Cardiac septum (tissue), 1 donor: ENCODE measurements at regions of chr10 and their contacts with region 1.

Region 1: GRCh38 chr10:28381903-28382347 is 79.1 kb upstream of the MPP7 start:
- DNase-seq: peak; percentile 81

Region 2: DNA sequence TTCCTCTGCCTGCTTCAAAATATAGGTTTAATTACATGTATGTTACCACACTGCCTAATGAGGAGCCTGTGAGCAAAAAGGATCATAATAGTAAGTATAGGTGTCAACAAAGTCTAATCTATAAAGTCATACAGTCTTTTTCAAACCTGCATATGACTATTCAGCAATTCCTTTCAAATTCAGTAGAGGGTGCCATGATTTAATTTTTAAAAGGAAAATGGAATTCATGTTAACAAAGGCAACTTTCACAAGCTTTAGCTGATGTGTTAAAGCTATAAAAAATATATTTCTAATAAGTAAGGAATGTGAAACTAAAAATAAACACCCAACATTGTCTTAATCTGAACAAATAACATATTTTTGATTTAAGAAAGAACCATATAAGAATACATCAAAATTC is 131.1 kb before region 1 on chr10:
- intact Hi-C with region 1: loop called (anchors 1 kb)
- DNase-seq: no peak

Region 3: DNA sequence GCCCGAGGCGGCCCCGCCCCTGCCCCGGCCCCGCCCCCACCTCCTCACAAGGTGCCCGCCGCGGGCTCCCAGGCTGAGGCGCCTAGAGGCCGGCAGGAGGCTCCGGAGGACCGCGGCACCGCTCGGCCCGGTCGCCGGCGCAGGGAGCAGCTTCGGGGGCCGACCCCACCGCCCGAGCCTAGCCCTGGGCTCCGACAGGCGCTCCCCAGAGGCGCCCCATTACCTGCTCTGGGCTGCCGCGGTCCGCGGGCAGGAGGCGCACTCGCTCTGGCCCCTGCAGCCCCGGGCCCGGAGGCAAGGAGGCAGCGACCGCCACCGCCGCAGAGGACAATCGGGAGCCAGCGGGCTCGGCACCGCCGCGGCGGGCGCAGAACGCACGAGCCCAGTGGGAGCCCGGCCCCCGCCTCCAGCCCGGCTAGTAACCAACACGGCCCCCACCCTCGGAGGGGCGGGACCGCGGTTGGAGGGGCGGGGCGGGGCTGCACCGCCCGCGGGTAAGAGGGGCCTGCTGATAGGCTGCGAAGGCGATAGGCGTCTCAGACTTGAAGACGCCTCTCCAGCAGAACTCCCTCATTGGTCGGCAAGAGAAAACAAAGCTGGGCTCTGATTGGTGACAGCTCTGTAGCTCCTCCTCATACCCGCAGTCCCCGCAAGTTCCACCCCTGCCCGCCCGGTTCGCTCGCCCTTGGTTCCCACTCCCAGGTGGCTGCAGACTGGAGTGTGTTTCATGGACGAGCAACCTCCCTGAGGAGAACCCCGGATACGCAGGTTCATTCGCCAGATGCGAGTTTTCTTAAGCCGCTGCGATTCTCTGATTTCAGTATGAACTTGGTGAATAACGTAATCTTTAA is 79.1 kb before region 1 on chr10 and contains the start of gene MPP7:
- intact Hi-C with region 1: loop called (anchors 1 kb)
- DNase-seq: peak; percentile 98
- total RNA-seq, gene MPP7: 13.1 TPM